Activated CD4-positive, alpha-beta memory T cell treated with anti-CD3 and anti-CD28 coated beads for 36 hours (primary cell): ENCODE measurements at regions of chr15 and their contacts with region 1.

Region 1: GRCh38 chr15:64010719-64011118 is 35.6 kb downstream of the DAPK2 start:
- DNase-seq: peak; percentile 92
- H3K4me3 Mint-ChIP-seq: peak overlapping the region; percentile 5
- H3K27ac Mint-ChIP-seq: peak overlapping the region; percentile 83
- H3K4me1 Mint-ChIP-seq: peaks cover 42% of the 10 kb centered on the region
- H3K27me3 Mint-ChIP-seq: no peaks in the 10 kb centered on the region

Region 2: GRCh38 chr15:63473999-63474809 is 536.5 kb before region 1 on chr15:
- CTCF ChIA-PET with region 1: no interaction called
- POLR2A ChIA-PET with region 1: no interaction called
- intact Hi-C with region 1: loop called (anchors 1 kb)
- DNase-seq: peak; percentile 84
- H3K4me3 Mint-ChIP-seq: peak overlapping the region; percentile 43
- H3K27ac Mint-ChIP-seq: peak overlapping the region; percentile 72
- H3K4me1 Mint-ChIP-seq: peaks cover 55% of the 10 kb centered on the region
- H3K27me3 Mint-ChIP-seq: no peaks in the 10 kb centered on the region

Region 3: DNA sequence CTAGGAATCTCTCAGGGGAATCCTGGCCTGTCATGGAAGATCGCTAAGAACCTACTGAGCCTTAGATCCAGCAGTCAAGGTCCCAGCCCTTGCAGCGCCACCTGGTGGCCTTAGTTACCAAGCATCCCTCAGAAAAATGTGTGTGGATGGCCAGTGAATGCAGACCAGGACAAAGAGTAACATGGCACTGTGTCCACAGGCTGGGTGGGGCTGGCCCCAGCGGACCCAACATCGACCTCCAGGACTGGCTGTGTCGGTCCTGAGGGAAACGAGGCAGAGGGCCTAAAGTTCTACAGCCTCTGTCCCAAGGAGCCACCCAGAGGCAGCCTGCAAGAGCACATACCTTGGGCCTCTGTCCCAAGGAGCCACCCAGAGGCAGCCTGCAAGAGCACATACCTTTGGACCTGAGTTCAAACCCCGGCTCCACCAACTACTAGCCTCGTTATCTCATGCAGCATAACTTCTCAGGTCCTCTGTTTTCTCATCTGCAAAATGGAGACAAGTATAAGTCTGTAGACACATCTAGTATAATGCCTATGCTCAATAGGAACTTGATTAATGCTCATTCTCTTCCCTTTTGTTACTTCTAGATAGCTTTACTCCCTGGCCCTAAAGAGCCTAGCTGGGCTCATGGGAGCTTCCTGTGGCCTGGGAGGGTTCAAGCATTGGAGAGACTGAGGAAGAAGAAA is 119.5 kb before region 1 on chr15:
- CTCF ChIA-PET with region 1: interaction called, 4 read pairs
- POLR2A ChIA-PET with region 1: no interaction called
- intact Hi-C with region 1: loop called (anchors 1 kb)
- DNase-seq: peak; percentile 85
- H3K4me3 Mint-ChIP-seq: no peak overlapping the region
- H3K27ac Mint-ChIP-seq: no peak overlapping the region
- H3K4me1 Mint-ChIP-seq: peaks cover 40% of the 10 kb centered on the region
- H3K27me3 Mint-ChIP-seq: no peaks in the 10 kb centered on the region

Region 4: DNA sequence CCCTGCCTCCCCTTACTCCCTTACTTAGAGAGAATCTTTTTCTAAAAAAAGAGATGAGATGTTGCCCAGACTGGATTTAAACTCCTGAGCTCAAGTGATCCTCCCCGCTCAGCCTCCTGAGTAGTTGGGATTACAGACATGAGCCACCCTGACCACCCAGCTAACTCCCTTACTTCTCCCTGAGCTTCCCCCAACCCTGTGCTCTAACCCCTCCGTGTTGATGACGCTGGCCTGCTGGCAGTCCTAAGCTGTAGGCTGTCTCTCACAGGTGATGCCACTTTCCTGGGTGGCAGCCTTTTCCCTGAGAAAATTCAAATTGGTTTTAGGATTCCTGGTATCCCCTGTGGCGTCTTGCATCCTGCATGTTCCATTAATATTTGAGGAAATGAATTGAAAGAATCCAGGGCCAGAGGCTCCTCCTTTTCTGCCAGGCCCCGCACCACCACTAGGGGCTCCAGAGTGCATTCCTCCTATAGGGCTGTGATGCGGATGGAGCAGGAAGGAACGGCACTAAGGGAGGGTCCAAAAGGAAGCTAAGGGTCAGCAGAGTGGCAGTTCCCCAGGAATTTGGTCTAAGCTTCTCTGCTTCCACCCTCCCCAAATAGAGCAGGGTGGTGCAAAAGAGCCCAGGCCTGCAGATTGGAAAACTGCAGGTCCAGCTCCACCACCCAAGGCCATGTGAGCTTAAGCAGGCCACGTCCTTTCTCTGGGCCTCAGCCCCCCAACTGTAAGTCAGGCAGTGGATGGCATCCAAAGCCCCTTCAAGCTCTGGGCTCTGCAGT is 65.5 kb before region 1 on chr15:
- CTCF ChIA-PET with region 1: interaction called, 28 read pairs
- POLR2A ChIA-PET with region 1: interaction called, 3 read pairs
- intact Hi-C with region 1: loop called (anchors 5 kb)
- DNase-seq: peak; percentile 82
- H3K4me3 Mint-ChIP-seq: no peak overlapping the region
- H3K27ac Mint-ChIP-seq: no peak overlapping the region
- H3K4me1 Mint-ChIP-seq: peaks cover 7% of the 10 kb centered on the region
- H3K27me3 Mint-ChIP-seq: no peaks in the 10 kb centered on the region

Region 5: DNA sequence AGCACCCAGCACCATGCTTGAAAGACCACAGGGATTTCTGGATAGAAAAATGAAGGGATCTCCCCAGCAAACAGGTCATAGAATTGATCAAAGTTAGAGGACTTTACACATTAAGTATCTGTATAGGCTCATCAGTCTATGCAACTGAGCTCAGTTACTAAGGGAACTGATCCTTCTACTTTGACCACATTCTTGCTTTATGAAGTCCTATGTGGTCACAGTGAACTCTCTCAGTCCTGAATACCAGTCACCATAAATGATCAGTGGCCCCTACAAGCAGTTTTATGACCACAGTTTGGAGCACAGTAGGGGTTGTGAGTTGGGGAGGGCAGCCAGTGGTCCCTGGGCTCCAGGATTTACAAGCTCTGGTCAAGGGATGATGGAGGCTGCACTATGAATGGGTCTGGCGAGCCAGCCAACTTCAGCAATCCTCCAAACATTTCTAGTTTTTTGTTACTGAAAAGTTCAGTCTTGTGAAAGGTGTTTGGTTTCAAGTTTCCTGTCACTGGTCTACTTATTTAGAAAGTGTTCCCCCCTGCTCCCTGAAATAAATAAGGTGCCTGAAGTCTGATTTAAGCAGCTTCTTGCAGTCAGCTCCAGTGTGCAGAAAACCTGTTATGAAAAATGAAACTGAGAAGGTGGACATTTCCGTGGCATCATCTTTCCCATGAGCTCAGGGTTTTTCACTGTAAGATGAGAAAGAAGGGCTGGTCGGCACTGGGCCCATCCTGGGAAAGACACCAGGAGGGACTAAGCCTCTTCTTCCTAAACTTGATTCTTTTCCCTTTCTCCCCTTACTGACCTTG is 39.9 kb before region 1 on chr15:
- CTCF ChIA-PET with region 1: interaction called, 12 read pairs
- POLR2A ChIA-PET with region 1: interaction called, 21 read pairs
- intact Hi-C with region 1: loop called (anchors 1 kb)
- DNase-seq: peak; percentile 61
- H3K4me3 Mint-ChIP-seq: peak overlapping the region; percentile 35
- H3K27ac Mint-ChIP-seq: peak overlapping the region; percentile 89
- H3K4me1 Mint-ChIP-seq: peaks cover 36% of the 10 kb centered on the region
- H3K27me3 Mint-ChIP-seq: peaks cover 1% of the 10 kb centered on the region

Region 6: DNA sequence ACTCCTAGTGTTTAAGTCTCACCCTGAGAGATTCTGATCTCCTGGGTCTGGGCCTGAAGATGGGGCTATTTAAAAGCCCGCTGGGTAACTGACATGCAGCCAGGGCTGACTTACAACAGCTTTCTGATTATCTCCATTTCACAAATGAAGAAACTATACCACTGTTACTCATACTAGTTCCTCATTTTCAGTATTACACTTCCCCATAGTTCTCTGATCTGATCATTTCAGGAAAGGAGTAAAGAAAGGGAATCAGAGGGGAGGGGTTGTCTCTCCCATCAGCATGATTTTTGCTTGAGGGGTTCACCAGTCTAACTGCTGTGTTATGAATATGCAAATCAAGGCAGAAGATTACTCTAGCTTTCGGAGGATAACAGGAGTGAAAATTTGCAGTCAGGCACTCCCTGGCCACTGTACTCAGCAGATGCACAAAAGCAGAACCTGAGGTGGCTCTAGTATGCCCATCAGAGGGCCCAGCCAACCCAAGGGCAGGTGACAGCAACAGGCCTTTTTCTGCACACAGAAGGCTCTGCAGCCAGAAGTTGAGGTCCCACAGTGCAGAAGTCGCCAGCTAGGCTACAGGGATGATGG is 23.9 kb before region 1 on chr15:
- CTCF ChIA-PET with region 1: interaction called, 15 read pairs
- POLR2A ChIA-PET with region 1: interaction called, 5 read pairs
- intact Hi-C with region 1: loop called (anchors 1 kb)
- DNase-seq: peak; percentile 20
- H3K4me3 Mint-ChIP-seq: no peak overlapping the region
- H3K27ac Mint-ChIP-seq: peak overlapping the region; percentile 38
- H3K4me1 Mint-ChIP-seq: peaks cover 13% of the 10 kb centered on the region
- H3K27me3 Mint-ChIP-seq: no peaks in the 10 kb centered on the region